ENCODE measurements at regions of chr3 and their contacts with region 1.

Region 1: GRCh38 chr3:150763122-150763841 is at the start of gene SIAH2:
- DNase-seq: peak; percentile 94
- ATAC-seq: peak; percentile 74
- H3K4me3 Mint-ChIP-seq: peak within 1 kb of the TSS; percentile 99
- H3K27ac Mint-ChIP-seq: peak within 1 kb of the TSS; percentile 100
- H3K4me1 Mint-ChIP-seq: peaks cover 77% of the 10 kb centered on the region
- H3K27me3 Mint-ChIP-seq: no peaks in the 10 kb centered on the region
- CTCF ChIP-seq: no peak
- total RNA-seq, gene SIAH2: 44.5 and 44.7 TPM in 2 replicates

Region 2: DNA sequence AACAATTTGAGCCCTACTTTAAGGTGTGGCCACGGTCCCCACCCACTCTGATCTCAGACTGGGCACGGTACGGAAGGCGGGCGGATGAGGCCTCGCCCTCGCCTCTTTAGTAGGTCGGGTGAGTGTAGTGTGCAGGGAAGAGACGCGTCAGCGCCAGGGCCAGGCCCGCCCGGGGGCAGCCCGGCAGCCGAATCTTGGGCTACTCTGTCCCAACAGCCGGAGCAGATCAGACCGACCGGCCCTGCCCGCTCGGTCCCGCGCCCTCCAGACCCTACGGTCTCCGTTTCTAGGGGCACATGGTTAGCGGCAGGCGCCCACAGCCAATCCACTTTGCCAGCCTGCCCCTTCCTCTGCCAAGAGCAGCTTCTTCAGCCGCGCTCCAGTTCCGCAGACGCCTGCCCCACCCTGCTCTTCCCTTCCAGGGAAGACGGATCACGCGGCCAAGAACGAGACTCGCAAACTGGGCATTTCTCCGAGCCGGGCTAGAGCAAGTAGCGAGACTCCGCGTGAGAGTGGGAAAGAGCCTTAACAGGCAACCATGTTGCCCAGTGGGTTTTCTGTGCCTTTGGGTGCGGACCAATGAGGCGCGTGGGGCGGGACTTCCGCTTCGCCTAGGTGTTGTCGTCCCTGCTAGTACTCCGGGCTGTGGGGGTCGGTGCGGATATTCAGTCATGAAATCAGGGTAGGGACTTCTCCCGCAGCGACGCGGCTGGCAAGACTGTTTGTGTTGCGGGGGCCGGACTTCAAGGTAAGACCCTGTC is 950.5 kb before region 1 on chr3 and contains the start of gene RNF13:
- CTCF ChIA-PET with region 1: no interaction called
- POLR2A ChIA-PET with region 1: no interaction called
- intact Hi-C with region 1: loop called (anchors 2 kb)
- DNase-seq: peak; percentile 87
- ATAC-seq: peak; percentile 88
- H3K4me3 Mint-ChIP-seq: peak within 1 kb of the TSS; percentile 99
- H3K27ac Mint-ChIP-seq: peak within 1 kb of the TSS; percentile 100
- H3K4me1 Mint-ChIP-seq: peaks cover 53% of the 10 kb centered on the region
- H3K27me3 Mint-ChIP-seq: peaks cover 3% of the 10 kb centered on the region
- CTCF ChIP-seq: no peak
- total RNA-seq, gene RNF13: 57.6 and 59.6 TPM in 2 replicates

Region 3: GRCh38 chr3:150546226-150547044 is 216.8 kb before region 1 on chr3 and contains the starts of genes EIF2A and SERP1:
- CTCF ChIA-PET with region 1: no interaction called
- POLR2A ChIA-PET with region 1: interaction called, 36 read pairs
- intact Hi-C with region 1: loop called (anchors 1 kb)
- DNase-seq: peak; percentile 98
- ATAC-seq: peak; percentile 92
- H3K4me3 Mint-ChIP-seq: peak within 1 kb of the TSS; percentile 96
- H3K27ac Mint-ChIP-seq: peak within 1 kb of the TSS; percentile 99
- H3K4me1 Mint-ChIP-seq: peaks cover 50% of the 10 kb centered on the region
- H3K27me3 Mint-ChIP-seq: no peaks in the 10 kb centered on the region
- CTCF ChIP-seq: no peak
- total RNA-seq, gene EIF2A: 105 and 109 TPM in 2 replicates
- total RNA-seq, gene SERP1: 87.2 and 88.2 TPM in 2 replicates

Region 4: GRCh38 chr3:150703299-150704134 is 59.8 kb before region 1 on chr3 and contains the start of gene ERICH6:
- CTCF ChIA-PET with region 1: no interaction called
- POLR2A ChIA-PET with region 1: interaction called, 41 read pairs
- intact Hi-C with region 1: loop called (anchors 1 kb)
- DNase-seq: peak; percentile 86
- ATAC-seq: peak; percentile 93
- H3K4me3 Mint-ChIP-seq: peak within 1 kb of the TSS; percentile 97
- H3K27ac Mint-ChIP-seq: peak within 1 kb of the TSS; percentile 98
- H3K4me1 Mint-ChIP-seq: peaks cover 19% of the 10 kb centered on the region
- H3K27me3 Mint-ChIP-seq: no peaks in the 10 kb centered on the region
- CTCF ChIP-seq: no peak
- total RNA-seq, gene ERICH6: not detected in 2 replicates

Region 5: DNA sequence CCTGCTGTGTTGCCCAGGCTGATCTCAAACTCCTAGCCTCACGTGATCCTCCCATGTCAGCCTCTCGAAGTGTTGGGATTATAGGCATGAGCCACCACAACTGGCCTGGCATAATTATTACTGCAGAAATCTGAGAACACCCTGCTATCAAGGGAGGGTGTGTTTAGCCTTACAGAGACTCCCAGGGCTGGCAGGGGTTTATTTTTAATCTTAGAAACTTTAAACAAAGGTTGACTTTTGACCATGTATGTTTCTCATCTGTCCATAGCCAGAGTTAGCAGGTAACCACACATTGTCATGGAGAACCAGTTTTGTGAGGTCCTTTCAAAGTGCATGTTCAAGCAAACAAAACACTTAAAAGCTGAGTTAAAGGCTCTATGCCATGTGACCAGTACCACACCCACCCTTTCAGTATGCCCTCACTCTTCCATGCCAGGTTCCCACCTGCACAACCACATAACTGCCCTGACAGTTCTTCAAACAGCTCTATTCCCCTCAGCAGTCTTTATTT is 11.5 kb before region 1 on chr3:
- CTCF ChIA-PET with region 1: interaction called, 3 read pairs
- POLR2A ChIA-PET with region 1: interaction called, 65 read pairs
- intact Hi-C with region 1: loop called (anchors 1 kb)
- DNase-seq: no peak
- ATAC-seq: no peak
- H3K4me3 Mint-ChIP-seq: no peak overlapping the region
- H3K27ac Mint-ChIP-seq: peak overlapping the region; percentile 18
- H3K4me1 Mint-ChIP-seq: peaks cover 84% of the 10 kb centered on the region
- H3K27me3 Mint-ChIP-seq: no peaks in the 10 kb centered on the region
- CTCF ChIP-seq: no peak

Region 6: DNA sequence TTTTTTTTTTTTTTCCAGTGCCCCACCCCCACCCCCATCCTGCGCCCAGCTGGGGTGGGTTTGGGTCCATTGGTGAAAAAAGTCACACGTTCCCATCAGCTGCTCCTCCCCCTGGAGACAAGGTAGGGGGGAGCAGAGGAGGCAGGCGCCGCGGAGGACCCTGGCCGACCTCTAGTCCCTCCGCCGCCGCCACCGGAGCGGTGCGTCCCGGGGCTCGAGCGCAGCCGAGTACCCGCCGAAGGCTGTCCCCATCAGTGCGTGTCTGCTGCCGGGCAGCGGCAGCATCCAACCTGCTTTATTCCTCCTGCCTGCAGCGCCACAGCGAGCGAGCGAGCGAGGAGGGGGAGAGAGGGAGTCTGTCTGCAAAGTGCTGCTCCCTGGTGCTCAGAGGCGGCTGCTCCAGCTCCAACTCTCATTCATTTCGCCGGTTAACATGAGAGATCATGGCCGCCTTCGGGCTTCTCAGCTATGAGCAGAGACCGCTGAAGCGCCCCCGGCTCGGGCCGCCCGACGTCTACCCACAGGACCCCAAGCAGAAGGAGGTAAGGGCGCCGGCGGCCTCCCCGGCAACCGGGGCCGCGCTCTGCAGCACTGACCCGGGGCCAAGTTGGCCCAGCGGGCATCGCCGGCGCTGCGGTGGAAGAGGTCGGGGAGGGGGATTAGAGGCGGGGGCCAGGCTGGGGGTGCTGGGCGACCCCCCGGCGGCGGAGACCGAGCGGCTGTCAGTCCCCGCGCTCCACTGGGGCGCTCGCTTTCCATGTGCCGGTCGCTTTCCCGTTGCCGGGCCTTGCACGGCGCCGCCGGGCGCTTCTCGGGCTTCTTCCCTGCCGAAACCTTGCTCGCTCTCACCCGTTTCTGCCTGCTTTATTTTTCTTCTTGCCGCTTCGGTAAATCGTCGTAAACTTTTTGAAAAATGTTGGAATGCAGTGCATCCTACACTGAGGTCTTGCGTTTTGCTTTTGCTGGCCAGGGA is 323.5 kb after region 1 on chr3:
- CTCF ChIA-PET with region 1: no interaction called
- POLR2A ChIA-PET with region 1: no interaction called
- intact Hi-C with region 1: loop called (anchors 10 kb)
- DNase-seq: peak; percentile 42
- ATAC-seq: peak; percentile 72
- H3K4me3 Mint-ChIP-seq: peak overlapping the region; percentile 89
- H3K27ac Mint-ChIP-seq: peak overlapping the region; percentile 30
- H3K4me1 Mint-ChIP-seq: peaks cover 11% of the 10 kb centered on the region
- H3K27me3 Mint-ChIP-seq: peaks cover 27% of the 10 kb centered on the region
- CTCF ChIP-seq: no peak